PC-3 (cell line): ENCODE measurements at regions of chr1 and their contacts with region 1.

Region 1: DNA sequence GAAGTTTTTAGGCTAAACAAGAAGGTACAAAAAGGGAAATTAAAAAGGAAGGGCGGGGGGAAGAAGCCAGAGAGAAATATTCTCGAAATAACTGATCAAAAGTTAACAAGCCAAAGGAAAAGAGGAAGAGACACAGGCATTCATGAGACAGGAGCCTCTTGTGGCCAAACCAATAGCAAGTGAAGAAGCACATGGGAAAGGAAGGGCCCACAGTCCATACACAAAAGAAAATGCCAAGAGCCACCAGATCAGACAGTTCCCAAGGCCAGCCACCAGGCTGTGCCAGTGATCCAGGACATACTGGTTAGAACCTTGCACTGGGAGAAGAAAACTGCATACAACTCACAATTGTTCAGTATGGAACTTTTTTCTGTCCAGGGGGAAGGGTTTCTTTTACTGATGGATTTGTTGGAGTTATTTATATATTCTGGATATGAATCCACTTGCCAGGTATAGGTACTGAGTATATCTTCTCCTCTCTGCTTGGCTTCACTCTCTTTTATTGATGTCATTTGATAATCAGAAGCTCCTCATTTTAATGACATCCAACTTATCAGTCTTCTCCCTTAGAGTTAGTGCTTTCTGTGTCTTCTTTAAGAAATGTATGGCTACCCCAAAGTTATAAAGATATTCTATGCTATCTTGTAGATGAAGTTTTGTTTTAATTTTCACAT is 76.8 kb downstream of the CD46 start:
- DNase-seq: peak; percentile 93
- ATAC-seq: peak; percentile 72
- H3K4me3 ChIP-seq: no peak overlapping the region
- H3K27ac ChIP-seq: no peak overlapping the region
- H3K4me1 ChIP-seq: peaks cover 43% of the 10 kb centered on the region
- H3K27me3 ChIP-seq: no peaks in the 10 kb centered on the region
- CTCF ChIP-seq: peak; percentile 97

Region 2: DNA sequence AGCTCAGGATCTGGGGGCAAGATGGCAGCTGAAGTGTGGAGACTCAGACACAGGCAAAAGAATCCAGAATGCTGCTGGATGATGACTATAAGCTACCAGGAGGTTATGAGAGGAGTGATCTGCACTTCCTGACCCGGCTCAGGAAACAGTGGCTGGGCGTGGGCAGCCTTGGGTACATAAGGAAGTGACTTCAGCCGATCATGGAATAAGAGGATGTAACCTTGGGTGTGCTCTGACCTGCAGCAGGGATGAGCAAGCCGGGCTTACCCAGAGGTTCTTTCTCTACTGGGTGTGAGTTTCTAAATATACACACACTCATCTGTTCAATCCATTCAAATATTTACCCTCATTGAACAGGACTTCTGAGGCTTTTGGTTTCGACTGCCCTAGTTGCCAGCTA is 19.6 kb after region 1 on chr1:
- CTCF ChIA-PET with region 1: interaction called, 3 read pairs
- POLR2A ChIA-PET with region 1: no interaction called
- intact Hi-C with region 1: loop called (anchors 1 kb)
- DNase-seq: peak; percentile 98
- ATAC-seq: peak; percentile 98
- H3K4me3 ChIP-seq: peak overlapping the region; percentile 42; the same call in 1 of the 2 replicates
- H3K27ac ChIP-seq: peak overlapping the region; percentile 95
- H3K4me1 ChIP-seq: peaks cover 40% of the 10 kb centered on the region
- H3K27me3 ChIP-seq: no peaks in the 10 kb centered on the region
- CTCF ChIP-seq: no peak

Region 3: GRCh38 chr1:207868774-207869721 is 40.4 kb after region 1 on chr1:
- CTCF ChIA-PET with region 1: interaction called, 20 read pairs
- POLR2A ChIA-PET with region 1: interaction called, 5 read pairs
- intact Hi-C with region 1: loop called (anchors 1 kb)
- DNase-seq: peak; percentile 91
- ATAC-seq: peak; percentile 71
- H3K4me3 ChIP-seq: peak overlapping the region; percentile 98
- H3K27ac ChIP-seq: peak overlapping the region; percentile 76
- H3K4me1 ChIP-seq: peaks cover 47% of the 10 kb centered on the region
- H3K27me3 ChIP-seq: no peaks in the 10 kb centered on the region
- CTCF ChIP-seq: peak; percentile 66

Region 4: GRCh38 chr1:207948536-207949250 is 120.1 kb after region 1 on chr1:
- CTCF ChIA-PET with region 1: interaction called, 3 read pairs
- POLR2A ChIA-PET with region 1: no interaction called
- intact Hi-C with region 1: loop called (anchors 5 kb)
- DNase-seq: no peak
- ATAC-seq: no peak
- H3K4me3 ChIP-seq: no peak overlapping the region
- H3K27ac ChIP-seq: no peak overlapping the region
- H3K4me1 ChIP-seq: peaks cover 23% of the 10 kb centered on the region
- H3K27me3 ChIP-seq: peaks cover 15% of the 10 kb centered on the region; the same call in 1 of the 2 replicates
- CTCF ChIP-seq: no peak